GM12878 (cell line): ENCODE measurements at regions of chr17 and their contacts with region 1.

Region 1: GRCh38 chr17:76278952-76279741 is 14.0 kb downstream of the UBALD2 start:
- DNase-seq: no peak
- ATAC-seq: peak; percentile 96
- H3K4me3 ChIP-seq: no peak overlapping the region
- H3K27ac ChIP-seq: no peak overlapping the region
- H3K4me1 ChIP-seq: no peaks in the 10 kb centered on the region; the same call in 1 of the 2 replicates
- H3K27me3 ChIP-seq: no peaks in the 10 kb centered on the region
- CTCF ChIP-seq: peak; percentile 89 to 97 (median 93)
- EP300 ChIP-seq: no peak
- POLR2A ChIP-seq: no peak
- RAD21 ChIP-seq: peak; percentile 100

Region 2: GRCh38 chr17:76103274-76104139 is 175.6 kb before region 1 on chr17 and contains the start of gene EXOC7:
- CTCF ChIA-PET with region 1: interaction called, 40 read pairs
- POLR2A ChIA-PET with region 1: interaction called, 3 read pairs
- RAD21 ChIA-PET with region 1: interaction called, 5 read pairs
- SMC1A ChIA-PET with region 1: interaction called, 3 read pairs
- in situ Hi-C with region 1: no loop called
- intact Hi-C with region 1: no loop called
- DNase-seq: peak; percentile 75
- ATAC-seq: peak; percentile 96
- H3K4me3 ChIP-seq: peak within 1 kb of the TSS; percentile 90
- H3K27ac ChIP-seq: peak within 1 kb of the TSS; percentile 71
- H3K4me1 ChIP-seq: peaks cover 6% of the 10 kb centered on the region
- H3K27me3 ChIP-seq: no peaks in the 10 kb centered on the region
- CTCF ChIP-seq: no peak
- EP300 ChIP-seq: no peak
- POLR2A ChIP-seq: peak; percentile 95
- RAD21 ChIP-seq: no peak
- polyA plus RNA-seq, gene EXOC7: 18.8 to 25.5 TPM

Region 3: GRCh38 chr17:76121932-76122430 is 157.2 kb before region 1 on chr17:
- CTCF ChIA-PET with region 1: interaction called, 316 read pairs
- POLR2A ChIA-PET with region 1: interaction called, 5 read pairs
- RAD21 ChIA-PET with region 1: interaction called, 149 read pairs
- SMC1A ChIA-PET with region 1: interaction called, 63 read pairs
- in situ Hi-C with region 1: loop called (anchors 5 kb)
- intact Hi-C with region 1: loop called (anchors 1 kb)
- DNase-seq: no peak
- ATAC-seq: peak; percentile 9
- H3K4me3 ChIP-seq: peak overlapping the region; percentile 25; the same call in 1 of the 2 replicates
- H3K27ac ChIP-seq: no peak overlapping the region
- H3K4me1 ChIP-seq: peaks cover 6% of the 10 kb centered on the region
- H3K27me3 ChIP-seq: no peaks in the 10 kb centered on the region
- CTCF ChIP-seq: no peak
- EP300 ChIP-seq: no peak
- POLR2A ChIP-seq: no peak
- RAD21 ChIP-seq: no peak

Region 4: GRCh38 chr17:76160896-76161528 is 118.1 kb before region 1 on chr17:
- CTCF ChIA-PET with region 1: interaction called, 18 read pairs
- POLR2A ChIA-PET with region 1: no interaction called
- RAD21 ChIA-PET with region 1: interaction called, 3 read pairs
- SMC1A ChIA-PET with region 1: interaction called, 7 read pairs
- in situ Hi-C with region 1: no loop called
- intact Hi-C with region 1: no loop called
- DNase-seq: no peak
- ATAC-seq: no peak
- H3K4me3 ChIP-seq: no peak overlapping the region
- H3K27ac ChIP-seq: no peak overlapping the region
- H3K4me1 ChIP-seq: no peaks in the 10 kb centered on the region
- H3K27me3 ChIP-seq: no peaks in the 10 kb centered on the region
- CTCF ChIP-seq: no peak
- EP300 ChIP-seq: no peak
- POLR2A ChIP-seq: no peak
- RAD21 ChIP-seq: no peak

Region 5: DNA sequence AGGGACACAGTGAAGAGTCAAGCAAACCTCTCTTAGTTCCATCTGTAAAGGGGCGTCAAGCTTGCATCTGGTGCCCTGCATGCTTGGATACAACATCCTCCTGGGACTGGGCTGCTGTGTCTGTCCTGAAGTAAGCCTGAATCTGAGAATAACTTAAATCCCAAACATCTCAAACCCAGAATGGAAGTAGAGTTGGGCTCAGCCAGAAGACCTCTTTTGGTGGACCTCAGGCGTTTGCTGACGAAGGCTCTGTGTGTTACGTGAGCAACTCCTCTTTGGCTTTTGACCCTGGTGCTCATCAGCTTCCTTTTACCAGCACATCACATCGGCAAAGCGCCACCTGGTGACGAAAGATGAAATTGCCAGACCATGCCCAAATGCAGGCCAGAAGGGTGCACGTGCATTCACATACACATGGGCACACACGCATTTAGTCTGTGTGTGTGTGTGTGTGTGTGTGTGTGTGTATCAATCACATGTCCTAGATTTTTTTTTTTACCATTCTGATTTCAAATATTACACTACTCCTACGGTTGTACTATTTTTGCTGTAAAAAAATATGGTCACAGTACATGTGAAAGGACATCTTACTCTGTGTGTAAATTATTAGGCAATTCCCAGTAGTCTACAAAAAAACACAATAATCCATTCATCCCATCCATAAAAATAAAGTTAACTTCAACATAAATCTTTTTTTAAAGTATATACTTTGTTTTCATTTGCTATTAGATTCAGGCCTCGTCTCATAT is 97.0 kb before region 1 on chr17:
- CTCF ChIA-PET with region 1: interaction called, 160 read pairs
- POLR2A ChIA-PET with region 1: interaction called, 427 read pairs
- RAD21 ChIA-PET with region 1: interaction called, 419 read pairs
- SMC1A ChIA-PET with region 1: interaction called, 152 read pairs
- in situ Hi-C with region 1: no loop called
- intact Hi-C with region 1: loop called (anchors 1 kb)
- DNase-seq: peak; percentile 94
- ATAC-seq: peak; percentile 83
- H3K4me3 ChIP-seq: no peak overlapping the region
- H3K27ac ChIP-seq: peak overlapping the region; percentile 24; the same call in 1 of the 2 replicates
- H3K4me1 ChIP-seq: peaks cover 30% of the 10 kb centered on the region
- H3K27me3 ChIP-seq: no peaks in the 10 kb centered on the region
- CTCF ChIP-seq: peak; percentile 83 to 97 (median 93); a peak in 5 of 6 replicates
- EP300 ChIP-seq: no peak
- POLR2A ChIP-seq: no peak
- RAD21 ChIP-seq: peak; percentile 81

Region 6: DNA sequence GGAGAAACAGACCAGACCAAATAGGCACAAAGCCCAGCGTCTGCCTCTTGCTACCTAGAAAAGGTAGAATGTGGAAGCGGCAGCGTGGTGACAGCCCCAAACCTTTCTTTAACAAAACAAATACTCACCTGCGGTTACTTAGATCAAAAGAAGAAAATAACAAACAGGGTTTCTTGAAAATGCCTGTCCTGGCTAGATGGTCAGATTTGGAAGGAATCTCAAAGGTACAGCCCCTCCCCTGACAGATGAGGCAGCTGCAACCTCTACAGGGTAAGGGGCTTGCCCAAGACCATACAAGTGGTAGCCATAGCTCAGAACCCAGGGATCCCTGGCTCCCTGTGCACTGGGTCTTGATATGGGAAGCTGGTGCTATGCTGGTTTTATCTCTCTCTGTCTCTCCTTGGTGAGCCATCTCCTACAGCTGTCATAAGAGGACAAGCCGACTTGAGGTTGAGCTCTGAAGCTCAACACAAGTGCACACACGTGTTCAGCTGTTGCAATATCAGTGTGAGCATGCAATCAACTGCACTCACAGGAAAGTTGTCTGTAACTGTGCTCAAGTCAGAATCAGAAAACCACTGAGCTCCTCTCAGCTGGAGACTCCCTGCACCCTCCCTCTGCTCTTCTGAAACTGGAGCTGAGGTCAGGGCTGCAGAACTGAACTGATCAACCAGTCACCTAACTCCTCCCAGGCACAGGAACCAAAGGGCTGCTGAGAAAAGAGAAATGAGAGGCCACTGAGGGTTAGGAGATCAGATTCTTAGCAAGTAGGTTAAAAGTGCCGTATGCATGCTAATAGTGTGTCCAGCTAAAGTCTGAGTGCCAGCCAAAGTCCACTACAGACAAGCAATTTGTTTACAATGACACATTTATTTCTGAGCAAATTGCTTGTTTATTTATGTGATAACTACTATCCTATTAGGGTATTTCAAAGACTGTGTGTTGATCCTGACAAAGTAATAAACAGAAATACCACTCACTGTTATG is 32.8 kb before region 1 on chr17:
- CTCF ChIA-PET with region 1: interaction called, 6 read pairs
- POLR2A ChIA-PET with region 1: interaction called, 5 read pairs
- RAD21 ChIA-PET with region 1: interaction called, 89 read pairs
- SMC1A ChIA-PET with region 1: interaction called, 5 read pairs
- in situ Hi-C with region 1: no loop called
- intact Hi-C with region 1: no loop called
- DNase-seq: peak; percentile 98
- ATAC-seq: peak; percentile 100
- H3K4me3 ChIP-seq: no peak overlapping the region
- H3K27ac ChIP-seq: peak overlapping the region; percentile 80
- H3K4me1 ChIP-seq: peaks cover 34% of the 10 kb centered on the region
- H3K27me3 ChIP-seq: no peaks in the 10 kb centered on the region
- CTCF ChIP-seq: no peak
- EP300 ChIP-seq: peak; percentile 68 to 81
- POLR2A ChIP-seq: peak; percentile 83
- RAD21 ChIP-seq: 0 out of 2 replicates have a peak, but pooled peaks have one; percentile 1

Region 7: GRCh38 chr17:76353599-76354316 is 74.6 kb after region 1 on chr17 and contains the start of gene PRPSAP1:
- CTCF ChIA-PET with region 1: no interaction called
- POLR2A ChIA-PET with region 1: no interaction called
- RAD21 ChIA-PET with region 1: no interaction called
- SMC1A ChIA-PET with region 1: no interaction called
- in situ Hi-C with region 1: no loop called
- intact Hi-C with region 1: no loop called
- DNase-seq: peak; percentile 72
- ATAC-seq: peak; percentile 98
- H3K4me3 ChIP-seq: peak within 1 kb of the TSS; percentile 66
- H3K27ac ChIP-seq: peak within 1 kb of the TSS; percentile 91
- H3K4me1 ChIP-seq: peaks cover 13% of the 10 kb centered on the region
- H3K27me3 ChIP-seq: no peaks in the 10 kb centered on the region
- CTCF ChIP-seq: peak in 1 of 3 experiments; percentile 28; a peak in 1 of 6 replicates
- EP300 ChIP-seq: 0 out of 4 replicates have a peak, but pooled peaks of 1 of the 2 experiments have one; percentile 13
- POLR2A ChIP-seq: peak; percentile 99
- RAD21 ChIP-seq: no peak
- polyA plus RNA-seq, gene PRPSAP1: 26.9 to 34.7 TPM